Dendritic cell treated with granulocyte-macrophage colony-stimulating factor and Interleukin-4, amounts not matched to agents 40 ng/mL and 50 ng/mL, for 4 days (primary cell): ENCODE measurements at regions of chr3 and their contacts with region 1.

Region 1: GRCh38 chr3:127544192-127544802 is 46.2 kb downstream of the TPRA1 start:
- H3K4me3 Mint-ChIP-seq: no peak overlapping the region
- H3K27ac Mint-ChIP-seq: no peak overlapping the region
- H3K4me1 Mint-ChIP-seq: peaks cover 17% of the 10 kb centered on the region
- H3K27me3 Mint-ChIP-seq: peaks cover 30% of the 10 kb centered on the region

Region 2: GRCh38 chr3:126679318-126679751 is 865.0 kb before region 1 on chr3:
- intact Hi-C with region 1: loop called (anchors 1 kb)
- H3K4me3 Mint-ChIP-seq: no peak overlapping the region
- H3K27ac Mint-ChIP-seq: peak overlapping the region; percentile 37
- H3K4me1 Mint-ChIP-seq: peaks cover 11% of the 10 kb centered on the region
- H3K27me3 Mint-ChIP-seq: peaks cover 40% of the 10 kb centered on the region

Region 3: DNA sequence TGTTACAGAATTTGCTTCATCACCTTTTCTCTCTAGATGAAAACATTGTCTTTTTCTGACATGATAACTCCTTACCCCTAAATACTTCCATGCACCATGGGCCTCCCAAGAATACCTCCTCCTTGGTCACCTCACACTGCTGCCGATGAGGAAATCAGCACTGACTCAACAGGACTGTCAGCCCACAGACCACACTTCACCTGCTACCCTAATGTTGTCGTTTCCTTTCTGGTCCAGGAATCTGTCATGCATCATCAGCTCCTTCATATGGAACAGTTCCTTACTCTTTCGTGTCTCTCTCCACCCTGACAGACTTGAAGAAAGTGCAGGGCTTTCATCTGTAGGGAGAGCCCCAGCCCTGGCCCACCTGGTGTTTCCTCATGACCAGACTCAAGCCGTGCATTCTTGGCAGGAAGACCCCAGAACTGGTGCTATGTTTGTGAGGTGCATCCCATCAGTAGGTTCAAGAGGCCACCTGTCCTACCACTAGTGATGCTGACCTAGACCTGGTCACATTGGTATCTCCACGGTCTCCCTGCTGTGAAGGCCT is 602.5 kb before region 1 on chr3:
- intact Hi-C with region 1: loop called (anchors 5 kb)
- H3K4me3 Mint-ChIP-seq: no peak overlapping the region
- H3K27ac Mint-ChIP-seq: no peak overlapping the region
- H3K4me1 Mint-ChIP-seq: peaks cover 9% of the 10 kb centered on the region
- H3K27me3 Mint-ChIP-seq: peaks cover 83% of the 10 kb centered on the region

Region 4: DNA sequence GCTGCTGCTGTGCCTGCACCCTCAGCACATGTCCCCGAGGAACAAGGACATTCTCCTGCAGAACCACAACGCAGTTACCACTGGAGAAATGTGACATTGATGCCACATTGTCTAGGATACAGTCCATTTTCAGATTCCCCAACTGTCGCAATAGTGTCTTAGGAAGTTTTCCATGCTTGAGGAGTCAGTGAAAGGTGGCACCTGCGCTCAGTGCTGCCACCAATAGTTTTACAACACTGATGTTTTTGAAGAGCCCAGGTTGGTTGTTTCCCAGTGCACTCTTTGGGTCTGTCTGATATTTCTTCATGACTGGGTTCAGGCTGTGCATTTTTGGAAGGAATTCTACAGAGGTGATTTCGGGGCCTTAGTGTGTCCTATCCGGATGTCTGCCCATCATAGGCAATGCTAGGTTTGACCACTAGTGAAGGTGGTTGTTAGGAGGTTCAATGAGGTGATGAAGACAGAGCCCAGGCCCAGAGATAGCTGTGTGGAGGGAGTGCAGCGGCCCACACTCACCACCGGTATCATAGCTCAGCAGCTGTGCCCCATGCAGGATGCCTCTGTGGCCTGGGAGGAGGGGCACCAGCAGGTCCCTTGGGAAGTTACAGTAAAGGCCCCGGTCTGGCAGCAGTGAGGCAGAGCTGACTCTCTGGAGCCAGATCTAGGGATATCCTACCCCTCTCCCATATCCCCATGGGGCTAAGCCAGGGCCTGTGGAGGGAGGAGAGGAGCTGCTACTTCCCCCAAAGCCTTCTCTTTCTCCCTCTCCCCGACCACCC is 825.8 kb after region 1 on chr3:
- intact Hi-C with region 1: no loop called
- H3K4me3 Mint-ChIP-seq: no peak overlapping the region
- H3K27ac Mint-ChIP-seq: no peak overlapping the region
- H3K4me1 Mint-ChIP-seq: no peaks in the 10 kb centered on the region
- H3K27me3 Mint-ChIP-seq: no peaks in the 10 kb centered on the region